ENCODE measurements at regions of chr14 and their contacts with region 1.

Region 1: GRCh38 chr14:63276492-63277342 is 42.0 kb downstream of the GPHB5 start:
- DNase-seq: no peak
- H3K4me3 Mint-ChIP-seq: no peak overlapping the region
- H3K27ac Mint-ChIP-seq: no peak overlapping the region
- H3K4me1 Mint-ChIP-seq: no peaks in the 10 kb centered on the region
- H3K27me3 Mint-ChIP-seq: no peaks in the 10 kb centered on the region

Region 2: GRCh38 chr14:62162998-62163589 is 1113.6 kb before region 1 on chr14:
- intact Hi-C with region 1: loop called (anchors 5 kb)
- DNase-seq: no peak
- H3K4me3 Mint-ChIP-seq: no peak overlapping the region
- H3K27ac Mint-ChIP-seq: no peak overlapping the region
- H3K4me1 Mint-ChIP-seq: no peaks in the 10 kb centered on the region
- H3K27me3 Mint-ChIP-seq: peaks cover 2% of the 10 kb centered on the region

Region 3: GRCh38 chr14:62179367-62180018 is 1097.2 kb before region 1 on chr14:
- intact Hi-C with region 1: loop called (anchors 5 kb)
- DNase-seq: no peak
- H3K4me3 Mint-ChIP-seq: no peak overlapping the region
- H3K27ac Mint-ChIP-seq: no peak overlapping the region
- H3K4me1 Mint-ChIP-seq: no peaks in the 10 kb centered on the region
- H3K27me3 Mint-ChIP-seq: peaks cover 2% of the 10 kb centered on the region

Region 4: DNA sequence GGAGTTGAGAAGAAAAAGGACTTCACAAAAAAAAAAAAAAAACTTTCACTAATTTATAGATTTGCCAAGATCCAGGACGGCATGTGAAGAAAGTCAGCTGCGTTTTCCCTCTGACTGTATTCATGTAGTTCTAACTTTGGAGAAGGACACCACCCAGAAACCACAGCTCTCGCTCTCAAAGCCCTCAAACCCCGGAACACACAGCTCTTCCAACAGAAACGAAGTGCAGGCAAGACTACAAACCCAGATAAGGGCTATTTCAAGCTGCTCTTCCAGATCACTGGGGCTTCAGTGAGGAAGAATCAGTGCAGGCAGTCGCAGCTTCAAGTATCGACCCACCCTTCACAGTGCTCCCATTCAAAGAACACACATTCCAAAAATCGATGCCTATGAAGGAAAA is 244.6 kb before region 1 on chr14:
- intact Hi-C with region 1: no loop called
- DNase-seq: no peak
- H3K4me3 Mint-ChIP-seq: no peak overlapping the region
- H3K27ac Mint-ChIP-seq: no peak overlapping the region
- H3K4me1 Mint-ChIP-seq: no peaks in the 10 kb centered on the region
- H3K27me3 Mint-ChIP-seq: no peaks in the 10 kb centered on the region

Region 5: DNA sequence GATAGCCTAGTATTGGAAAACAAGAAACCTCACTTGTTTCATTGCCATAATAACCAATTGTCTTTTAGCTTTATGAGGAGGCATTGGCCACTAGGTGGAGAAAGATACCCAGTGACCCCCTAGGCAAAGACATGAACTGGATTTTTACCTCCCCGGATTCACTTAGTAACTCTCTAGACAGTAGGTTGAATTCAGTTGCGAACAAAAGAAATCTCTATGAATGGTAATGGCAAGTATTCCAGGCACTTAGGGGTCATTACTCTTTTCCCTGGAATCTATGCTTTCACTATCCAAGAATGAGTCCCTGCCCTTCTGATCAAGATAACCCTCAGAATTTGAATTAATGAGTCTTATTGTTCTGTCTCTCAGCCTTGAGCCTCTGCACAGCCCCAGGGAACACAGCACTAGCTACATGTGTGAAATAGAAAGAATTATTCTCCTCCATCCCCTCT is 101.9 kb before region 1 on chr14:
- intact Hi-C with region 1: loop called (anchors 5 kb)
- DNase-seq: no peak
- H3K4me3 Mint-ChIP-seq: no peak overlapping the region
- H3K27ac Mint-ChIP-seq: no peak overlapping the region
- H3K4me1 Mint-ChIP-seq: no peaks in the 10 kb centered on the region
- H3K27me3 Mint-ChIP-seq: no peaks in the 10 kb centered on the region

Measured in activated T-helper 2 cell treated with anti-CD3 and anti-CD28 coated beads, Interferon-gamma antibody, Interleukin-2, Interleukin-4, amounts not matched to agents 10 μg/mL and 5 μg/mL and 100 μg/mL, durations not matched to agents 14 hours and 24 hours and 36 hours (primary cell).